ENCODE measurements at regions of chr7 and their contacts with region 1.

Region 1: DNA sequence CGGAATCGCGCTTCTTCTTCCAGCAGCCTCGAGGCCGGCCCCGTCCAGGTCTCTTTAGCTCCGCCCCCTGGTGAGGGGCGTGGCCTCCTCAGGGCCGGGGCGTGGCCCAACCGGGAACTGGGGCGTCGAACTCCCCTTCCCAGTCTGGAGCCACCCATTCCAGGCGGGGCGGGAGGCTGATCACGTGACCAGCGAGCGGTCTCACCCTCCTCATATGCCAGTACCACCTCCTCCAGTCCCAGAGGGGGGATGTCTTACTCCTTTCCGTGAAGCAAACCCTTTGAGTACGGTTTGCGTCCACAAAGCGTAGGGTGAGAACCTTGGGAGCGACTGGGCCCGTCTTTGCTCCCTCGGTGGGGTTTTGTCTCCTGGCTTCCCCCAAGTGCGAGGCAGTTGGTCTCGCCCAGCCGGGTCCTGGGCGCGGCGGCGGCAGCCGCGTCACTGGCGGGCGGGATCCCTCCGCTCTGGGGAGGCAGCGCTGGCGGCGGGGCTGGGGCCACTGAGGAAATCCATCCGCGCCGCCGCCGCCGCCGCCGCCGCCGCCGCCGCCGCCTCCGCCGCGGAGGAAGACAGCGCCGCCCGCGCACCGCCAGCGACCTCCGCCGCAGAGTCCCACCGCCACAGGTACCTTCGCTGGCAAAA is at the start of gene GNB2:
- DNase-seq: peak; percentile 100
- H3K4me3 ChIP-seq: peak within 1 kb of the TSS; percentile 77 to 100 (median 96)
- H3K27ac ChIP-seq: peak within 1 kb of the TSS; percentile 94 to 100 (median 98)
- H3K4me1 ChIP-seq: peaks cover 0 to 19% (median 6%) of the 10 kb centered on the region in 4 donors
- H3K27me3 ChIP-seq: no peaks in the 10 kb centered on the region
- CTCF ChIP-seq: no peak
- EP300 ChIP-seq: peak; percentile 28
- POLR2A ChIP-seq: peak; percentile 25
- total RNA-seq, gene GNB2: 192 to 301 (median 246) TPM

Region 2: DNA sequence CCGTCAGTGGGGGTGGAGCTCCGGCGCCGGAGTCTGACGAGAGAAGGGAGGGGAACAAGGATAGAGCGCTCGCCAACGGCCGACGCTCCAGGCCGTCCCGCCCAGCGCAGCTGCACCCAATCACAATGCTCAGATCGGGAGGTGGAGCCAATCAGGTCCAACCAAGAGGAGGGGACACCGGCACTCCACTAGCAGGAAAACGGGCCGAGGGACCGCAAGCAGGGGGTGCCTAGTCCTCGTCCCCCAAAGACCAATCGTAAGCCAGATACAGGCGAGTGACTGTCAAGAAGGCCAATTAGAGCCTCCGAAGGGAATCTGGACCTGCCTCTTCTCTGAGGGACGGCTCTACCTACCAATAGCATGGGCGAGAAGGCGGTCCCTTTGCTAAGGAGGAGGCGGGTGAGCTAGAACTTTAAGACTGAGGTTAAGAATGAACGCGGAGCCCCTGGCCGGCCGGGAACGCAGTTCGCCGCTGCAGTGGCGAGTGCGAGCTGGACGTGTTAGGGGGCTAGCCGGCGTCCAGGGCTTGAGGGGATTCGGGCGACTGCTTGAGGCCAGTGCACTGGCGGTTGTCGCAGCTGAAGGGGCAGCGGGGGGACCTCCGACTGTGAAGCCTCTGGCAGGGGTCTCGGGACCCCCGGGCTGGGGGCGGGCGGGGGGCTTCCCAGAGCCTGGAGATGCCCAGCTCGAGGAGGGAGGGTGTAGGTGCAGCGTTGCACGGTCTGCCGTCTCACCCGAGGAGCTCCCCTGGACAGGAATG is 87.0 kb before region 1 on chr7 and contains the start of gene FBXO24:
- in situ Hi-C with region 1: loop called in 2 of 4 experiments (anchors 10 to 25 kb)
- intact Hi-C with region 1: loop called (anchors 5 kb)
- DNase-seq: peak; percentile 100
- H3K4me3 ChIP-seq: peak within 1 kb of the TSS; percentile 82 to 100 (median 96)
- H3K27ac ChIP-seq: peak within 1 kb of the TSS; percentile 97 to 99 (median 98)
- H3K4me1 ChIP-seq: peaks cover 9 to 40% (median 33%) of the 10 kb centered on the region in 4 donors
- H3K27me3 ChIP-seq: no peaks in the 10 kb centered on the region
- CTCF ChIP-seq: no peak
- EP300 ChIP-seq: no peak
- POLR2A ChIP-seq: no peak
- total RNA-seq, gene FBXO24: 0.14 to 0.79 TPM in 2 of 4 donors, not detected in the others